Dendritic cell treated with granulocyte-macrophage colony-stimulating factor and Interleukin-4, amounts not matched to agents 40 ng/mL and 50 ng/mL, for 4 days (primary cell): ENCODE measurements at regions of chr1 and their contacts with region 1.

Region 1: GRCh38 chr1:26700711-26701110 is 4.9 kb downstream of the ARID1A start:
- H3K4me3 Mint-ChIP-seq: peak overlapping the region; percentile 61
- H3K27ac Mint-ChIP-seq: no peak overlapping the region
- H3K4me1 Mint-ChIP-seq: peaks cover 24% of the 10 kb centered on the region
- H3K27me3 Mint-ChIP-seq: no peaks in the 10 kb centered on the region

Region 2: GRCh38 chr1:26627954-26628353 is 72.8 kb before region 1 on chr1:
- intact Hi-C with region 1: no loop called
- H3K4me3 Mint-ChIP-seq: peak overlapping the region; percentile 57
- H3K27ac Mint-ChIP-seq: peak overlapping the region; percentile 91
- H3K4me1 Mint-ChIP-seq: peaks cover 56% of the 10 kb centered on the region
- H3K27me3 Mint-ChIP-seq: no peaks in the 10 kb centered on the region

Region 3: DNA sequence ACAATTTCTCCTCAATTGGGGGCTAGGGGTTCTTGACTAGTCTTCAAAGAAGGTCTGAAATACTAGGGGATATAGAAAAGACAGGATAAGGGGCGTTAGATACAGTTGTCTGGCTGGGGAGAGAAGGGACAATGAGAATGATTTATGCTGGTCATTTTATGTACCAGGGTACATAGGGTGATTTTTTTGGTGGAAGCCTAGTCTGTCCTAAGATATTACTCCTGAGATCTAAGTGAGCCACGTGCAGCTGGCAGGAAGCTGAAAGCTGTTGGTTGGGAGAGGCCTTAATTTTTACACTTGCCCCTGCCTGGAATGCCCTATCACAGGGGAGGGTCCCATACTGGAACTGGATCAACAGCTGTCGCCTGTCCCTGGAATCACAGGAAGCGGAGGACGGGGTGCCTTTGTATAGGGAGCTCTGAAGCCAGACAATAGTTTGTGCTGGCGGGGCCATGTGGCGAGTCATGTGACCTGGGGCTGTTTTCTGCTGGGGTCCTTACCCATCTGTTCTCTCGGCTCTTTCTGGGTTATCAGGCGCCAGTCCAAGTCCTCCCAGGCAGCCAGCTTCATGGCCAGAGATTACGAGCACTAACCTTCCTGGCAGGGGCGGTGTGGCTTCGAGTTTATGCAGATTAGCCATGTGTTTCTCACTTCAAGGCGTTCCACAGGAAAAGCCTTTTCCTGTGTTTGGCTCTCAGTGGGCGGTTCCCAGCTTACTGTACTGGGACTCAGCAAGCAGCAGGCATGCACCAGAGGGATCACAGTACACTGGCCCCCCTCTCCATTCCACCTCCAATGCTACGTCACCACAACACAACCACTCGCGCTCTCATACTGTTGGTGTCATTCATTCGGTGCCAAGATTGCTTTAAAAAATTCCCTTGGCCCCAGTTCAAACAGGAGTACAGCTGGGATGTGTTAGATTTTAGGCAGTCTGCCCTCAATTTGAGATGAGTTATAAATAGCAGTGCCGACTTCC is 22.6 kb after region 1 on chr1:
- intact Hi-C with region 1: no loop called
- H3K4me3 Mint-ChIP-seq: peak overlapping the region; percentile 47
- H3K27ac Mint-ChIP-seq: peak overlapping the region; percentile 70
- H3K4me1 Mint-ChIP-seq: peaks cover 78% of the 10 kb centered on the region
- H3K27me3 Mint-ChIP-seq: no peaks in the 10 kb centered on the region

Region 4: DNA sequence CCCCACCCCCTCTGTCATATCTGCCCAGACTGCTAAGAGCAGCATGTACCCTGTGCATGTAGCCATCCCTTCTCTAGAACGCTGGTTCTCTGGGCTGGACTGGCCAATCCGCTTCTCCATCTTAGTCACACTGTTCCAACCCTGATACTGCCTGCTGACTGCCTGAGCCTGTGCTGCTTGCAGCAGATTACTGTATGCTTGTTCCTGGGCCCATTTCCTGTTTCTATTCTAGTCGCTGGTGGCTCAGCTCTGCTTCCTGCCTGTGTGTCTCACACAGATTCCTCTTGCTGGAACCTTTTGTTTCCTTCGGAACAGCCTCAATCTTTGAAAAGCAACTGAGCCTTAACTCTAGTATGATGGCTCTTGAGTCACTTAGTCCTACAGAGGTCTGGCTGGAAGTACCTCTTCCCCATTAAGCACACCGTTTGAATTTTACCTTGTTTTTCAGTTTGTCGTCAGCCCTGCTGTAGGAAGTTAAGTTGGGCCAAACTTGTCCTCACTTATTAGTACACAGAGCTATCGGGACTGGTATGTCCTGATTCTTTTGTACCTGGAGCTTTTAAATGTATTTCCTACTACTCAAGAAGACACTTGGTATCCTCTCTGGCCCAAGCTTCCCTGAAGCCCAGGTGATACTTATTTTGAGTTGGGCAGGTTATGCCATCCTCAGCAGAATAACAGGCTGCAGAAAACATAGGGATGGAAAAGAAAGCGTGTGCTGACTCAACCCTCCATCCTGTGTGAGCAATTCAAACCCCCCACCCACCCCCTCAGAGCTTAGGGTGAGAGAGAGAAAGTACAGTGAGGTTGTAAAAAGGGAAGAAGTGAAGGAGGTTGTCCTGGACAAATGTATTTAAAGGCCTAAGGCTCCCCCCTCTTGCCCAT is 43.6 kb after region 1 on chr1:
- intact Hi-C with region 1: loop called (anchors 5 kb)
- H3K4me3 Mint-ChIP-seq: no peak overlapping the region
- H3K27ac Mint-ChIP-seq: peak overlapping the region; percentile 68
- H3K4me1 Mint-ChIP-seq: peaks cover 58% of the 10 kb centered on the region
- H3K27me3 Mint-ChIP-seq: no peaks in the 10 kb centered on the region

Region 5: GRCh38 chr1:26771643-26772321 is 71.1 kb after region 1 on chr1:
- intact Hi-C with region 1: no loop called
- H3K4me3 Mint-ChIP-seq: no peak overlapping the region
- H3K27ac Mint-ChIP-seq: peak overlapping the region; percentile 26
- H3K4me1 Mint-ChIP-seq: peaks cover 34% of the 10 kb centered on the region
- H3K27me3 Mint-ChIP-seq: no peaks in the 10 kb centered on the region